Breast epithelium (tissue), 4 donors: ENCODE measurements at regions of chr4 and their contacts with region 1.

Region 1: DNA sequence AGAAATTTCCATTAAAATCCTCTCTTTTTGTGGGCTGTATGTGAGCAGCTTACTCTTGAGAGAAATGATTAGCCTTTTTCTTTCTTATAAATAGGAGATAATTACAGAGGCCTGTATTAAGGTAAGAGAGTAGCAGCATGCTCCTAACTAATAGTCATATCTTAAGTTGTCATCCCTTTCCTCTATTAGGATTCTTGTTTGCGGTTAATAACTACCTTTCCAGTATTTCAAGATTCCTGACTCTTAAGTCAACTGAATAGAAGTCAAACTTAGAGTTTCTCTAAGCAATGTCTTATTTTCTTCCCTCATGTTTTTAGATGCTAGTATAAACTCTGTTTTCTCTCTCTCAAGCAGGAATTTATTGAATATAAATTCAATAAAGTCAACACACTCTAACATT is 139.9 kb upstream of the GPRIN3 start:
- DNase-seq: no peak
- H3K4me3 ChIP-seq: no peak overlapping the region
- H3K27ac ChIP-seq: no peak overlapping the region
- H3K4me1 ChIP-seq: no peaks in the 10 kb centered on the region
- H3K27me3 ChIP-seq: no peaks in the 10 kb centered on the region
- CTCF ChIP-seq: no peak
- POLR2A ChIP-seq: no peak

Region 2: GRCh38 chr4:88971536-88971935 is 476.0 kb before region 1 on chr4:
- intact Hi-C with region 1: loop called (anchors 5 kb)
- DNase-seq: no peak
- H3K4me3 ChIP-seq: no peak overlapping the region
- H3K27ac ChIP-seq: no peak overlapping the region
- H3K4me1 ChIP-seq: no peaks in the 10 kb centered on the region
- H3K27me3 ChIP-seq: no peaks in the 10 kb centered on the region
- CTCF ChIP-seq: no peak
- POLR2A ChIP-seq: no peak

Region 3: DNA sequence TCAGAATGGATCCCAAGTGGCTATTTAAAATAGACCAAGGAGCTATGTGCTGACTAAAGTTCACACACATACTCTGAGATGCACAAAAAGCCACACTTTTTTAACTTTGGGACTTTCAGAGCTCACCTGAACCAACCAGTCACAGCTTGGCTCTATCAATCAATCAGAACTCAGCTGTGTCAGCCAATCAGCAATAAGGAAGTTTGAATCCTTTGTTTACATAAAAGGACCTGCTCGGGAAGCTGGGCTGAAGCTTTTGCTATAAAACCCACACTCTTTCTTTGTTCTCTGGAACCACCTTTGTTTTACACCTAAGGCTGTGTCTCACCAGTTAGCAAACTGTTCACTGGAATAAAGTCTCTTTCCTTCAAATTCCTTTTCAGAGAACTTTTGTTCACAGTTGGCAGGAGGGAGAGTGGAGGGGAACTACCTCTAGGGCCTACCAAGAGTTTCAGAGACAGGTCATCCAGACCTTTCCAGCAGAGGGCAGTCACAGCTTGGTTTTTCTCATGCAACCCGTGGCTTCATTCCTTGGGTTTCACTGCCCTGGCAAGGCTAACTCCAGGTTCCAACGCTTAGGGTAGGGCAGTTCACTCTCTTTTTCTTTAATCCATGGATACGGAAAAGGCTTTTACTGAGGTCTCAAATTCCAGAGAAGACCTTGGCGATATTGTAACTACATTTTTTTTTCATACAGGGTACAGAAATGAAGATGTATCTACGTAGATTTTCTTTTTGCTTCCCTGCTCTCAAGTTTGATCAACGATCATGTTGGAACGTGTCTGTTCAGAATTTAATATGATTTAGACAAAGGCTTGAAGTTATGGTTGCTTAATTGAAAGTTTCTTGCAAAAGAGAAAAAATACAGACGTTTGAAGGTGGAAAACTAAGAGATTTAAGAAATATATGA is 220.6 kb before region 1 on chr4:
- intact Hi-C with region 1: no loop called
- DNase-seq: peak; percentile 72 to 79
- H3K4me3 ChIP-seq: no peak overlapping the region
- H3K27ac ChIP-seq: peak overlapping the region; percentile 8 to 73
- H3K4me1 ChIP-seq: no peaks in the 10 kb centered on the region
- H3K27me3 ChIP-seq: no peaks in the 10 kb centered on the region
- CTCF ChIP-seq: peak; percentile 66 to 82 (median 72)
- POLR2A ChIP-seq: no peak